IMR-90 (cell line): ENCODE measurements at regions of chr10 and their contacts with region 1.

Region 1: GRCh38 chr10:67849331-67850011 is 11.5 kb upstream of the DNAJC12 start:
- DNase-seq: peak; percentile 95
- ATAC-seq: peak; percentile 98
- H3K4me3 ChIP-seq: peak overlapping the region; percentile 61
- H3K27ac ChIP-seq: peak overlapping the region; percentile 87
- H3K4me1 ChIP-seq: no peaks in the 10 kb centered on the region
- H3K27me3 ChIP-seq: no peaks in the 10 kb centered on the region
- CTCF ChIP-seq: no peak
- POLR2A ChIP-seq: no peak
- RAD21 ChIP-seq: no peak

Region 2: DNA sequence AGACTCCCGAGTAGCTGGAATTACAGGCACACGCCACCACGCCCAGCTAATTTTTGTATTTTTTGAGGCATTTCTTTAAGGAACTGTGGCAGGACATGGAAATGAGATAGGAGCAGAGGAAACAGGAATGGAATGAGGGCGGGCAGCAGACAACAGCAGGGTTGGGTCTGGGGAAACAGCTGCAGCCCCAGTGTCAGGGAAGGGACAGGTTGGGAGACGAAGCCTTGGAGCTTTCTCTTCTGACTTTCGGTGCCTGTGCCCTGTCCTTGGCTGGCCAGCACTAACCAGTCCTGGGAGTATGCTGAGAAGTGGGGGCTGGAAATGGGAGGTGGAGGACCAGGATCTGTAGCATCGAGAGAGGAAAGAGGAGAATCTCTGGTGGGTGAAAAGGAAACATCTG is 335.1 kb after region 1 on chr10:
- CTCF ChIA-PET with region 1: no interaction called
- POLR2A ChIA-PET with region 1: no interaction called
- dilution Hi-C with region 1: no loop called
- in situ Hi-C with region 1: loop called (anchors 25 kb)
- intact Hi-C with region 1: no loop called
- DNase-seq: no peak
- ATAC-seq: no peak
- H3K4me3 ChIP-seq: no peak overlapping the region
- H3K27ac ChIP-seq: no peak overlapping the region
- H3K4me1 ChIP-seq: no peaks in the 10 kb centered on the region
- H3K27me3 ChIP-seq: no peaks in the 10 kb centered on the region
- CTCF ChIP-seq: no peak
- POLR2A ChIP-seq: no peak
- RAD21 ChIP-seq: no peak

Region 3: GRCh38 chr10:68331455-68332258 is 482.2 kb after region 1 on chr10 and contains the start of gene HNRNPH3:
- CTCF ChIA-PET with region 1: no interaction called
- POLR2A ChIA-PET with region 1: no interaction called
- dilution Hi-C with region 1: no loop called
- in situ Hi-C with region 1: no loop called
- intact Hi-C with region 1: loop called (anchors 10 kb)
- DNase-seq: peak; percentile 97
- ATAC-seq: peak; percentile 86
- H3K4me3 ChIP-seq: peak within 1 kb of the TSS; percentile 98
- H3K27ac ChIP-seq: peak within 1 kb of the TSS; percentile 97
- H3K4me1 ChIP-seq: peaks cover 12% of the 10 kb centered on the region
- H3K27me3 ChIP-seq: no peaks in the 10 kb centered on the region
- CTCF ChIP-seq: no peak
- POLR2A ChIP-seq: peak; percentile 99
- RAD21 ChIP-seq: no peak
- total RNA-seq, gene HNRNPH3: 10.6 and 23.6 TPM in 2 replicates